Activated naive CD4-positive, alpha-beta T cell treated with anti-CD3 and anti-CD28 coated beads, Interleukin-2, amount 10 ng/mL, durations not matched to agents 7 days and 5 days (primary cell): ENCODE measurements at regions of chr6 and their contacts with region 1.

Region 1: GRCh38 chr6:15441215-15441868 is 195.5 kb downstream of the JARID2 start:
- DNase-seq: peak; percentile 54
- H3K4me3 Mint-ChIP-seq: no peak overlapping the region
- H3K27ac Mint-ChIP-seq: no peak overlapping the region
- H3K4me1 Mint-ChIP-seq: peaks cover 81% of the 10 kb centered on the region
- H3K27me3 Mint-ChIP-seq: no peaks in the 10 kb centered on the region

Region 2: GRCh38 chr6:15121443-15121842 is 319.9 kb before region 1 on chr6:
- CTCF ChIA-PET with region 1: no interaction called
- DNase-seq: no peak
- H3K4me3 Mint-ChIP-seq: no peak overlapping the region
- H3K27ac Mint-ChIP-seq: no peak overlapping the region
- H3K4me1 Mint-ChIP-seq: peaks cover 9% of the 10 kb centered on the region
- H3K27me3 Mint-ChIP-seq: peaks cover 11% of the 10 kb centered on the region

Region 3: DNA sequence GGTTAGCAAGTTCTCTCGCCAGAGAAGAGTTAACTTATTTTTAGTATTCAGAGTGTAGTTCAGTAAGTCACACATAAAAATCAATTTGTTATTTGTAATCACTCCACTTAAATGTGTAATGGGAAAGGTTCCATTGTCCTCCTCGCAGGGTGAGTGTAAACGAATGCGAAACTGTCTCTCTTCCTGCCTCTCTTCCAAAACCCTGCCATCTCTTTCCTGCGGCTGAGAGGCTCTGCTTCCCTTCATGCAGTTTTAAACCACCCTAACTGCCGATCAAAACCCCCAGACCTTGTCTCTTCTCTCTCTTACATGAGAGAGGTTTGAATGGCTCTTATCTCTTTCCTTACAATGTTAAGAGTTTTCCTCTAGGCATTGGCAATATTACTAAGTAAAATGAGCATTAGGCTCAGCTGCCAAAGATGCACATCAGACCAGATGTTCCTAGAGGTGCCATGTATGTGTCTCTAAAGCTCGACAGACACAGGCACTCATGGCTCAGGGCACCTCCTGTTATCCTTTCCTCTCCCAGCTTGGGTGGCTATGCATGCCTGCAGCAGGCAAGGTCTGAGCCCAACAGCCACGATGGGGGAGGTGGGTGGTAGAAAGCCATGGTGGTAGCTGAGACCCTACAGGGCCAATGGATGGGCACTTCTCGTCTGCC is 104.3 kb before region 1 on chr6:
- CTCF ChIA-PET with region 1: no interaction called
- DNase-seq: no peak
- H3K4me3 Mint-ChIP-seq: no peak overlapping the region
- H3K27ac Mint-ChIP-seq: peak overlapping the region; percentile 43
- H3K4me1 Mint-ChIP-seq: peaks cover 59% of the 10 kb centered on the region
- H3K27me3 Mint-ChIP-seq: no peaks in the 10 kb centered on the region

Region 4: GRCh38 chr6:15420959-15421438 is 20.3 kb before region 1 on chr6:
- CTCF ChIA-PET with region 1: interaction called, 10 read pairs
- DNase-seq: no peak
- H3K4me3 Mint-ChIP-seq: peak overlapping the region; percentile 45
- H3K27ac Mint-ChIP-seq: peak overlapping the region; percentile 91
- H3K4me1 Mint-ChIP-seq: peaks cover 67% of the 10 kb centered on the region
- H3K27me3 Mint-ChIP-seq: no peaks in the 10 kb centered on the region